Caco-2 (cell line): ENCODE measurements at regions of chr21 and their contacts with region 1.

Region 1: DNA sequence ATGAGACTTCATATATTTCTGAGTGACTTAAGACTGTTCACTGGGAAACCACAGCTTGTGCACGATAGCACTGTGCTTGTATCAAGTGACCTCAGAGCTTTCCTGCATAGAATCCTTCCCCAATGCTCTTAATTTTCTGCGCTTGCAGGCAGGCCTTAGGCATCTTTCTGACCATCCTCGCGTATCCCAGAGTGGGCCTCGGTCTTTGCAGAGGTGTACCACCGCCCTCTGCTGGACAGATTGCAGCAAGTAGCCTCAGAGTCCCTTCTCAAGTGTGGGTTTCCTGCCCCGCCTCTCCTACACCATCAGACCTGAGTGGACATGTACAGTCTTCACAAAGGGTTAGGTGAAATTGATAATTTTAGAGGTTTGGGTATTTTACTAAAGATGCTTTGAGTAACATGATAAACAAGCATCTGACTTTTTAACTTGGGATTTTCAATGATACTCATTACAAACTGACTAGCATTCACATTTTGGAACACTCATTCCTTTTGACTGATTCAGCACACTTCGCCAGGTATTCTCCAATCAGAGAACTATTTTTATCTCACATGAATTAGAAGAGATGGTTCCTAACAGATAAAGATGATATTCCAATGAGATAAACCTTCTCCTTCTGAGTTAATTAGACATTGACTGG is 246.5 kb upstream of the USP25 start:
- DNase-seq: peak; percentile 83 to 86
- H3K4me3 ChIP-seq: no peak overlapping the region
- H3K4me3 Mint-ChIP-seq: no peak overlapping the region
- H3K27ac Mint-ChIP-seq: no peak overlapping the region
- H3K4me1 ChIP-seq: no peaks in the 10 kb centered on the region
- H3K4me1 Mint-ChIP-seq: no peaks in the 10 kb centered on the region
- H3K27me3 ChIP-seq: no peaks in the 10 kb centered on the region
- H3K27me3 Mint-ChIP-seq: no peaks in the 10 kb centered on the region
- CTCF ChIP-seq: peak; percentile 89 to 93

Region 2: DNA sequence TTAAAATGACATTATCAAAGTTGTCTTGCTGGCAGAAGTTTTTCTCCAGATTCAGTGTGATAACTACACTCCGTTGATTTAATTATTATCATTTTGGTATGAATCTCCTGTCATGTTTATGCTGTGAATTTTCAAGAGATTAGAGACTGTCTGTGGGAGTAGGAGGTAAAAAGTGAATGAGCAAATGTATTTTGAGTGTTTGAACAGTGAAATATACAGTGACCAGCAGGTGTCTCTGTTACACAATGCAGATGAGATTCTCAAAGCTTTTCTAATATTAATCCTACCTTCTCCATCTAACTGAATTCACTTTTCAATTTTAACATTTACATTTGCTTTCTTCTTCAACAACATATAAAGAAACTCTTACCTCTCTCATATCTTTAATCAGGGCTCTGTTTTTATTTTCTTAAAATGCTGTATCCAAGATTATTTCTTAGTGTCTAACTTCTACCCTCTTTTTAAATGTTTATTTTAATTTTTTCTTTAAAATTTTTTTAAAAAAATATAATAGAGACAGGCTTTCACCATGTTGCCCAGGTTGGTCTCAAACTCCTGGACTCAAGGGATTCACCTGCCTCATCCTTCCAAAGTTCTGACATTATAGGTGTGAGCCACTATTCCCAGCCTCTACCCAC is 1079.5 kb before region 1 on chr21:
- CTCF ChIA-PET with region 1: no interaction called
- POLR2A ChIA-PET with region 1: no interaction called
- intact Hi-C with region 1: loop called (anchors 2 kb)
- DNase-seq: peak in 1 of 2 experiments; percentile 28
- H3K4me3 ChIP-seq: no peak overlapping the region
- H3K4me3 Mint-ChIP-seq: no peak overlapping the region
- H3K27ac Mint-ChIP-seq: no peak overlapping the region
- H3K4me1 ChIP-seq: no peaks in the 10 kb centered on the region
- H3K4me1 Mint-ChIP-seq: no peaks in the 10 kb centered on the region
- H3K27me3 ChIP-seq: no peaks in the 10 kb centered on the region
- H3K27me3 Mint-ChIP-seq: no peaks in the 10 kb centered on the region
- CTCF ChIP-seq: peak; percentile 55 to 66

Region 3: DNA sequence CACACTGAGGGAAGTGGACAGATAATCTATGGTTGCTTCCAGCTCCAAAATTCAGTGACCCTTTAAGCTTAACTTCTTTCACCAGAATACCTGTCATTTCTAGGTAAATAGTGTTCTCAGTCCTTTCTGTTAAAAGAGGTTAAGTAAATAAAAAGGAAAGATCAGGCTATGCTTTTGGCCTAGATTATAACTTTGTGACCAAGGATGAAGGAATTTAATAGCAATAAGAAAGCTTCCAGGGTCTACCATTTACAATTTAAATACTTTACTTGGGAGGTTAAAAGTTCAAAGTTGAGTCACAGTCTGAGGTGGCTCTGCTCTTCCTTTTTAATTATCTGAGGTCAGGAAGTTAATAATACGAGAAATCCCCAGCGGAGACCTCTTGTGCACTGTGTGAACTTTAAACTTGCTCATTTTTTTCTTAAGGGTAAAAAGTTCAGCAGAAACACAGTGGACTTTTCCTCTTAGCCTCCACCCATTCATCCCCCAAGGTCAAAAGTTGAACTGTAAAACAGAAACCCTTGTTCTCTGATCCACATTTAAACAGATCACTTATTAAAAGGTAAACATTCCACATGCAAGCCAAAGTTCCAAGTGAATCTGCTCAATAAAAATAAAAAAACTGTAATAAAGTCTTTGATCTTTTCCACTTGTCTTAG is 605.6 kb before region 1 on chr21:
- CTCF ChIA-PET with region 1: interaction called, 3 read pairs
- POLR2A ChIA-PET with region 1: no interaction called
- intact Hi-C with region 1: loop called (anchors 5 kb)
- DNase-seq: peak; percentile 46 to 53
- H3K4me3 ChIP-seq: no peak overlapping the region
- H3K4me3 Mint-ChIP-seq: no peak overlapping the region
- H3K27ac Mint-ChIP-seq: peak overlapping the region; percentile 45
- H3K4me1 ChIP-seq: peaks cover 61% of the 10 kb centered on the region
- H3K4me1 Mint-ChIP-seq: peaks cover 56% of the 10 kb centered on the region
- H3K27me3 ChIP-seq: no peaks in the 10 kb centered on the region
- H3K27me3 Mint-ChIP-seq: no peaks in the 10 kb centered on the region
- CTCF ChIP-seq: no peak

Region 4: DNA sequence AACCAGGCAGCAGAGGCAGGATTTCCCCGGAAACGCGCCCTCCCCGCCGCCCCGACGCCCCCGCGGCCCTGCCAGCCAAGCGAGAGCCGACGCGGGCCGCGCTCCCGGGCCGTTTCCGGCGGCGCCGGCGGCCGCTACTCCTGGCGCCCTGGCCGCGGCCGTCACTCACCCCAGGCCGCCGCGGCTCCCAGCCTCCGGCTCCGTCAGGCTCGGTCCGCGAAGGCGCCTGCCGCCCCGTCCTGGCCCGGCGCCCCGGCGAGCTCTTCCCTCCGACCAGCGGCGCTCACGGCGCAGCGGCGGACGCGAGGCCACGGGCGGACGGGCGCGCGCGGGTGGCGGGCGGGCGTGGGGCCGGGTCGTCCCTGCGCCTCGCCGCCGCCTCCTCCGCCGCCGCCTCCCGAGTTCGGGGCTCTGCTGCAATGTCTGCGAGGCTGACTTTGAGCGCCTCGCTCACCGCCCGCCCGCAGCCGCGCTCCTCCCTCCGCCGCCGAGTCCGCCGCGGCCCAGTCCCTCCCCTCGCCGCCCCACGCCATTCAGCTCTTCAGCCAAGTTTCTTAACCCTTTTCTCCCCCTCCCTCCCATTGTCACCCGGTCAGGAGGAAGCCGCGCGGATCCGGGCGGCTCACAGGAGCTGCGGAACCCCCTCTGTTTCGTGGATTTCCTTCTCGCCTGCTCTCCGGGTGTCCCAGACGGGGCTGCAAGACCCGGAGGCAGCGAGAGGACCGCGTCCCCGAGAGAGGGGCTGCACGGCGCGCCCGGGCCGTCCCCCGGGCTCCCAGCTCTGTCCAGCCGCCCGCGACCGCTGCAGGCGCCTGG is 418.5 kb before region 1 on chr21 and contains the start of gene NRIP1:
- CTCF ChIA-PET with region 1: no interaction called
- POLR2A ChIA-PET with region 1: interaction called, 3 read pairs
- intact Hi-C with region 1: loop called (anchors 1 kb)
- DNase-seq: peak; percentile 88 to 91
- H3K4me3 ChIP-seq: peak within 1 kb of the TSS; percentile 85
- H3K4me3 Mint-ChIP-seq: peak within 1 kb of the TSS; percentile 99
- H3K27ac Mint-ChIP-seq: peak within 1 kb of the TSS; percentile 96
- H3K4me1 ChIP-seq: peaks cover 22% of the 10 kb centered on the region
- H3K4me1 Mint-ChIP-seq: peaks cover 33% of the 10 kb centered on the region
- H3K27me3 ChIP-seq: no peaks in the 10 kb centered on the region
- H3K27me3 Mint-ChIP-seq: no peaks in the 10 kb centered on the region
- CTCF ChIP-seq: no peak
- total RNA-seq, gene NRIP1: 24.7 and 28.6 TPM in 2 replicates

Region 5: GRCh38 chr21:15241997-15242736 is 241.1 kb before region 1 on chr21:
- CTCF ChIA-PET with region 1: no interaction called
- POLR2A ChIA-PET with region 1: no interaction called
- intact Hi-C with region 1: loop called (anchors 1 kb)
- DNase-seq: peak in 1 of 2 experiments; percentile 6
- H3K4me3 ChIP-seq: no peak overlapping the region
- H3K4me3 Mint-ChIP-seq: no peak overlapping the region
- H3K27ac Mint-ChIP-seq: no peak overlapping the region
- H3K4me1 ChIP-seq: peaks cover 5% of the 10 kb centered on the region
- H3K4me1 Mint-ChIP-seq: peaks cover 10% of the 10 kb centered on the region
- H3K27me3 ChIP-seq: no peaks in the 10 kb centered on the region
- H3K27me3 Mint-ChIP-seq: no peaks in the 10 kb centered on the region
- CTCF ChIP-seq: no peak

Region 6: GRCh38 chr21:15400905-15401304 is 82.4 kb before region 1 on chr21:
- CTCF ChIA-PET with region 1: no interaction called
- POLR2A ChIA-PET with region 1: no interaction called
- intact Hi-C with region 1: no loop called
- DNase-seq: no peak
- H3K4me3 ChIP-seq: no peak overlapping the region
- H3K4me3 Mint-ChIP-seq: no peak overlapping the region
- H3K27ac Mint-ChIP-seq: no peak overlapping the region
- H3K4me1 ChIP-seq: peaks cover 11% of the 10 kb centered on the region
- H3K4me1 Mint-ChIP-seq: no peaks in the 10 kb centered on the region
- H3K27me3 ChIP-seq: no peaks in the 10 kb centered on the region
- H3K27me3 Mint-ChIP-seq: no peaks in the 10 kb centered on the region
- CTCF ChIP-seq: no peak

Region 7: GRCh38 chr21:15430577-15430976 is 52.7 kb before region 1 on chr21:
- CTCF ChIA-PET with region 1: no interaction called
- POLR2A ChIA-PET with region 1: no interaction called
- intact Hi-C with region 1: no loop called
- DNase-seq: no peak
- H3K4me3 ChIP-seq: no peak overlapping the region
- H3K4me3 Mint-ChIP-seq: no peak overlapping the region
- H3K27ac Mint-ChIP-seq: no peak overlapping the region
- H3K4me1 ChIP-seq: no peaks in the 10 kb centered on the region
- H3K4me1 Mint-ChIP-seq: no peaks in the 10 kb centered on the region
- H3K27me3 ChIP-seq: no peaks in the 10 kb centered on the region
- H3K27me3 Mint-ChIP-seq: no peaks in the 10 kb centered on the region
- CTCF ChIP-seq: no peak

Region 8: GRCh38 chr21:15552914-15553494 is 69.7 kb after region 1 on chr21:
- CTCF ChIA-PET with region 1: interaction called, 3 read pairs
- POLR2A ChIA-PET with region 1: no interaction called
- intact Hi-C with region 1: loop called (anchors 5 kb)
- DNase-seq: no peak
- H3K4me3 ChIP-seq: no peak overlapping the region
- H3K4me3 Mint-ChIP-seq: no peak overlapping the region
- H3K27ac Mint-ChIP-seq: no peak overlapping the region
- H3K4me1 ChIP-seq: no peaks in the 10 kb centered on the region
- H3K4me1 Mint-ChIP-seq: peaks cover 7% of the 10 kb centered on the region
- H3K27me3 ChIP-seq: no peaks in the 10 kb centered on the region
- H3K27me3 Mint-ChIP-seq: no peaks in the 10 kb centered on the region
- CTCF ChIP-seq: peak; percentile 43 to 47

Region 9: GRCh38 chr21:15592271-15592860 is 109.1 kb after region 1 on chr21:
- CTCF ChIA-PET with region 1: no interaction called
- POLR2A ChIA-PET with region 1: no interaction called
- intact Hi-C with region 1: loop called (anchors 2 kb)
- DNase-seq: peak in 1 of 2 experiments; percentile 31
- H3K4me3 ChIP-seq: no peak overlapping the region
- H3K4me3 Mint-ChIP-seq: no peak overlapping the region
- H3K27ac Mint-ChIP-seq: no peak overlapping the region
- H3K4me1 ChIP-seq: peaks cover 14% of the 10 kb centered on the region
- H3K4me1 Mint-ChIP-seq: peaks cover 11% of the 10 kb centered on the region
- H3K27me3 ChIP-seq: no peaks in the 10 kb centered on the region
- H3K27me3 Mint-ChIP-seq: no peaks in the 10 kb centered on the region
- CTCF ChIP-seq: peak; percentile 52 to 73